ENCODE measurements at regions of chr18 and their contacts with region 1.

Region 1: GRCh38 chr18:57446322-57446721 is 11.1 kb downstream of the ONECUT2 start:
- DNase-seq: no peak
- H3K4me3 ChIP-seq: no peak overlapping the region
- H3K27ac ChIP-seq: no peak overlapping the region
- H3K4me1 ChIP-seq: no peaks in the 10 kb centered on the region
- H3K27me3 ChIP-seq: peaks cover 77% of the 10 kb centered on the region
- CTCF ChIP-seq: peak; percentile 59

Region 2: GRCh38 chr18:55998071-55998522 is 1448.2 kb before region 1 on chr18:
- CTCF ChIA-PET with region 1: no interaction called
- POLR2A ChIA-PET with region 1: no interaction called
- intact Hi-C with region 1: no loop called
- DNase-seq: peak; percentile 4
- H3K4me3 ChIP-seq: no peak overlapping the region
- H3K27ac ChIP-seq: no peak overlapping the region
- H3K4me1 ChIP-seq: no peaks in the 10 kb centered on the region
- H3K27me3 ChIP-seq: no peaks in the 10 kb centered on the region
- CTCF ChIP-seq: no peak

Region 3: DNA sequence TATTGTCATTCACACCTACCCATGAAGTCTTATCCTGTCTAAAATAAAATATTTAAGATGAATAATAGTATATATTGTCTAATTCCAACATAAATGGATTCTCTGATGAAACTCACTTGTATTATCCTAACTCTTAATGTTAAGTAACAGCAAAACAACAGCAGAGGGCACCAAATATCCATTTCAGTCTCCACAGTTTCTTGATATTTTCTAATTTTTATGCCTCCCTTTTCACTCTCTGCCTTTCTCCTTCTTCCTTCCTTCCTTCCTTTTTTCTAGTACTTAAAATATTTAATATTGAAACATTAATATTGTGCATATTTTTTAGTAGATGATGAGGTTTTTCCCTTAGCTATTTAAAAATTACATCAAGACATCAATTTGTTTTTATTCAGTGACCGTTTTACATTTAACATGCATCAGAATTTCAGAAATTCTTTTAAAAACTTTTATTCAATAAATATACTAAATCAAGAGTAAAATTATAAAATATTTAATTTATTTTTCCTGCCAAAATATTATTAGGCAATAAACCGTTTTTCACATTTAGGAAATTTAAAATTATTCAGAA is 697.5 kb before region 1 on chr18:
- CTCF ChIA-PET with region 1: no interaction called
- POLR2A ChIA-PET with region 1: no interaction called
- intact Hi-C with region 1: loop called (anchors 5 kb)
- DNase-seq: peak; percentile 62
- H3K4me3 ChIP-seq: no peak overlapping the region
- H3K27ac ChIP-seq: no peak overlapping the region
- H3K4me1 ChIP-seq: no peaks in the 10 kb centered on the region
- H3K27me3 ChIP-seq: no peaks in the 10 kb centered on the region
- CTCF ChIP-seq: peak; percentile 69

Measured in A673 (cell line).